ENCODE measurements at regions of chr10 and their contacts with region 1.

Region 1: GRCh38 chr10:118568327-118568848 is 27.1 kb downstream of the PRLHR start:
- DNase-seq: no peak
- ATAC-seq: peak; percentile 57 to 75

Region 2: DNA sequence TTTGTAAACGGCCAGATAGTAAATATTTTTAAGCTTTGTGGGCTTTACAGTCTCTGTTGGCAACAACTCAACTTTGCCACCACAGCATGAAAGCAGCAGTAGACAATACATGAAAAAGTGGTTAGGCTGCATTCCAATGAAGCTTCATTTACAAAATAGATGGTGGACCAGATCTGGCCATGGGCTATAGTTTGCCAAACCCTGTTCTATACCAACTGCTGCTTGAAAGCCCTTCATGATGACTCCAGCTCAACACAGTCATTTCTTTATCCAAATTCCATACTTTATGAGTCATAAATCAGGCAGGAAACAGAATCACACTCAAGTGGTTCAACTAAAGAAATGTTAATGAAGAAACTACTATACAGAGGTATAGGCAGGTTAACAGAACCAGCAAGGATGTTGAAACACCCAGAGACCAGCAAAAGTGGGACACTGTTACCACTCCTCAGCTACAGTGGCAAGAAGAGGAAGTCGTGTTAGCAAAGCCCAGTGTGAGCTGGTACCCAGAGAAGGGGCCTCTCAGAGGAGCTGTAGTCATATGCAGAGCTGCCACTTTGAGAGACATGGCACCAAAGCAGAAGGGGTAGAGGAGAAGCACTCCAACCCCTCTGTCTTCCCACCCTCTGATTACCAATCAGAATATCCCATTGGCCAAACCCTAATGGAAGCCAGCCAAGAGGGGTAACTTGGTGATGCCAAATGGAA is 45.4 kb before region 1 on chr10:
- intact Hi-C with region 1: no loop called
- DNase-seq: no peak
- ATAC-seq: no peak

Region 3: GRCh38 chr10:118720685-118721538 is 152.5 kb after region 1 on chr10:
- intact Hi-C with region 1: loop called (anchors 2 to 5 kb)
- DNase-seq: no peak
- ATAC-seq: peak in 1 of 2 donors; percentile 42

Region 4: DNA sequence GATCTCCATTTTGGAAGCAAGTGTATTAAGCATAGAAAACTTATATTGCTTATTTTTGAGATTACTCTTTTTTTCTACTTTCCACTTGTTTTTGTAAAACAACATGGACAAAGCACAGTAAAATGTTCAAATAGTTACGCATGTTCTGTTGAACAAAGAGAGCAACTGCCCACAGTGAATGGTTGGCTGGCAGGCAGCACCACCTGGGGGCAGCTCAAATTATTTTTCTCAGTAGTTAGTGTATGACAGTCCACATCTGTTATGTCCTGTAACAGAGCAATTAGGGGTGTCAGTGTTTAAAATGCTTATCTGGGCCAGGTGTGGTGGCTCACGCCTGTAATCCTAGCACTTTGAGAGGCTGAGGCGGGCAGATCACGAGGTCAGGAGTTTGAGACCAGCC is 232.5 kb after region 1 on chr10:
- intact Hi-C with region 1: loop called (anchors 1 to 5 kb)
- DNase-seq: no peak
- ATAC-seq: peak; percentile 74 to 76

Measured in left cardiac atrium (tissue), 4 donors.